ENCODE measurements at regions of chr20 and their contacts with region 1.

Region 1: GRCh38 chr20:3888622-3889488 is at the start of gene PANK2:
- DNase-seq: peak; percentile 85 to 96 (median 94)
- ATAC-seq: peak; percentile 98
- H3K4me3 ChIP-seq: peak within 1 kb of the TSS; percentile 82
- H3K4me3 Mint-ChIP-seq: peak within 1 kb of the TSS; percentile 96 to 100 (median 98)
- H3K27ac ChIP-seq: peak within 1 kb of the TSS; percentile 91
- H3K27ac Mint-ChIP-seq: peak within 1 kb of the TSS; percentile 87 to 99 (median 97)
- H3K4me1 ChIP-seq: peaks cover 10 to 25% of the 10 kb centered on the region in 2 donors
- H3K4me1 Mint-ChIP-seq: peaks cover 42 to 64% (median 55%) of the 10 kb centered on the region in 7 donors
- H3K27me3 ChIP-seq: no peaks in the 10 kb centered on the region
- H3K27me3 Mint-ChIP-seq: no peaks in the 10 kb centered on the region
- total RNA-seq, gene PANK2: 42.4 to 69.7 (median 59.1) TPM

Region 2: GRCh38 chr20:3276680-3277015 is 612.2 kb before region 1 on chr20:
- CTCF ChIA-PET with region 1: no interaction called
- POLR2A ChIA-PET with region 1: no interaction called
- intact Hi-C with region 1: no loop called
- DNase-seq: no peak
- ATAC-seq: no peak
- H3K4me3 ChIP-seq: no peak overlapping the region
- H3K4me3 Mint-ChIP-seq: no peak overlapping the region
- H3K27ac ChIP-seq: no peak overlapping the region
- H3K27ac Mint-ChIP-seq: no peak overlapping the region
- H3K4me1 ChIP-seq: no peaks in the 10 kb centered on the region
- H3K4me1 Mint-ChIP-seq: no peaks in the 10 kb centered on the region
- H3K27me3 ChIP-seq: no peaks in the 10 kb centered on the region
- H3K27me3 Mint-ChIP-seq: no peaks in the 10 kb centered on the region

Region 3: DNA sequence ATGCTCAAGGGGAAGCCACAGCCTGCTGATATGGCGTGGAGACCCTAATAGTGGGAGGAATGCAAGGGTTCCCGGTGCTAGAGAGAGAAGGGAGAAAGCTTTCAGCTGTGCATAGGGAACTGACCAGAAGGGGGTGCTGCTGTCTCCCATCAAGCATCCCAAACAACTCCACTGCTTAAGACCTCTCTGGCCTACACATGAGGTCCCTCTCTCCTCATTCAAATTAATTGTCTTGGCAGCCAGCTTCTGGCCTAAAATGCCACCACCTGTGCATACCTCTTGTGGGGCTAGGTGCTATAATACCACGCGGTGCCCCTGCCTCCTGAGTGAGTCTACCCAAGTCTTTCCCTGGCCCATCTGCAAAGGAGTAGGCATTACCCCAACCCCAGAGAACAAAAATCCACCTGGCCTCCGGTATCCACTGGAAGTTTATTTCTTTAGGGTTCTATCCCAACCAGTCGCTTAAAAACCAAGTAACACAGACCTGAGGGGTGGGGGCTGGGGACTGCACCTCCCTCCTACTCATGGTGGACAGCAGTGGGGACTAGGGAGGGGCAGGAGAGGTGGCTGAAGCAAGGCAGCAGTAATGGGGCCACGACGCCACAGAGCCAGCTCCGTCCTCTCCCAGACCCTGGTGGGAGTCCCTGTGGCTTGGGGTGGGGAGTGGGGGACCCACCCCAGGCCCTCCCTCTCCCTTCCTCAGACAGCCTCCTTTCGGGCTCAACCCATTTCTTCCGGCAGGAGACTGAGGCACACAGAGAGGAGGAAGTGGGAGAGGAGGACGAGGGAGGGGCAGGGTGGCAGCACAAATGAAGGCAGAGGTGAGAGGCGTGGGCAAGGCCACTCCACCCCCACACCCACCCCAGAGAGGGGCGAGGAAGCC is 135.5 kb before region 1 on chr20:
- CTCF ChIA-PET with region 1: no interaction called
- POLR2A ChIA-PET with region 1: no interaction called
- intact Hi-C with region 1: no loop called
- DNase-seq: peak in 8 of 9 donors; percentile 33 to 64 (median 56)
- ATAC-seq: peak; percentile 82
- H3K4me3 ChIP-seq: no peak overlapping the region
- H3K4me3 Mint-ChIP-seq: peak overlapping the region in 5 of 10 donors; percentile 32 to 83 (median 41)
- H3K27ac ChIP-seq: no peak overlapping the region
- H3K27ac Mint-ChIP-seq: peak overlapping the region in 5 of 9 donors; percentile 15 to 86 (median 47)
- H3K4me1 ChIP-seq: peaks cover 0 to 5% of the 10 kb centered on the region in 2 donors
- H3K4me1 Mint-ChIP-seq: peaks cover 0 to 15% (median 4%) of the 10 kb centered on the region in 7 donors
- H3K27me3 ChIP-seq: no peaks in the 10 kb centered on the region
- H3K27me3 Mint-ChIP-seq: no peaks in the 10 kb centered on the region

Region 4: DNA sequence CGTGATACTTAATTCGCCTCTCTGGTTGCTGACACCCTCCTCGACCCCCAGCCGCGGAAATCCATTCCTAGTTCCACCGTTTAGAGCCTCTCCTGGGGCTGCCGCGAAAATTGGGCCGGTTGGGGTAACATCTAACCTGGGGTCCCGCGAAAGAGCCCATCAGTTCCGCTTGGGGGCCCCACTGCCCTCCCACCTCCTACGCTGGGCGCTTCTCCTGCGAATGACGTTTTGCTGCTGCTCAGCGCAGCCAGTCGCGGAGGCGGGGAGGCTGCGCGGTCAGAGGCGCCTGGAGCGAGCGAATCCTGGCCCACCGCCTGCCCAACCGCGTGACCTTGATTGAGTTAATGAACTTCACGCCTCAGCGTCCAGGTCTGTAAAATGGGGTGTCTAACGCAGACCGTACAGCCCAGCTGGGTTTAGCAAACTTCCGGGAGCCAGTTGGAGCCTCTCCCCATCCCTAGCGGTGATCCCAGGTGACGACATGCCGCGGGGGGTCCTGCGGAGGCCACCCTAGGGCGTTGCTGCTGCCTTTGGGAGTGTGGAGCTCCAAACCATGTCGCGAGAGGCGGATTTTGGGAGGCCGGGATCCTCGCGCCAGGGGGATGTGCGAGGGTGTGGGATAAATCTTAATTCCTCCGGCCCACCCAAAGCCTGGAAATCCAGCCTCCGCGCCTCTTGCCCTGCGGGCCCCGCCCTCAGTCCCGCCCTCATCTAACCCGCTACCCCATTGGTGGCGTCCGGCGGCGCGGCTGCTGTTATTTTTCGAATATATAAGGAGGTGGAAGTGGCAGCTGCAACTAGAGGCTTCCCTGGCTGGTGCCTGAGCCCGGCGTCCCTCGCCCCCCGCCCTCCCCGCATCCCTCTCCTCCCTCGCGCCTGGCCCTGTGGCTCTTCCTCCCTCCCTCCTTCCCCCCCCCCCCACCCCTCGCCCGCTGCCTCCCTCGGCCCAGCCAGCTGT is 93.1 kb before region 1 on chr20 and contains the start of gene CDC25B:
- CTCF ChIA-PET with region 1: no interaction called
- POLR2A ChIA-PET with region 1: no interaction called
- intact Hi-C with region 1: loop called (anchors 1 to 2 kb)
- DNase-seq: peak; percentile 64 to 89 (median 84)
- ATAC-seq: peak; percentile 90
- H3K4me3 ChIP-seq: peak within 1 kb of the TSS; percentile 90
- H3K4me3 Mint-ChIP-seq: peak within 1 kb of the TSS; percentile 90 to 99 (median 98)
- H3K27ac ChIP-seq: peak within 1 kb of the TSS; percentile 95
- H3K27ac Mint-ChIP-seq: peak within 1 kb of the TSS; percentile 81 to 99 (median 97)
- H3K4me1 ChIP-seq: peaks cover 27 to 39% of the 10 kb centered on the region in 2 donors
- H3K4me1 Mint-ChIP-seq: peaks cover 24 to 43% (median 39%) of the 10 kb centered on the region in 7 donors
- H3K27me3 ChIP-seq: no peaks in the 10 kb centered on the region
- H3K27me3 Mint-ChIP-seq: peaks cover 0 to 7% (median 0%) of the 10 kb centered on the region in 5 donors
- total RNA-seq, gene CDC25B: 166 to 392 (median 281) TPM

Region 5: GRCh38 chr20:3846740-3847428 is 42.0 kb before region 1 on chr20 and contains the start of gene MAVS:
- CTCF ChIA-PET with region 1: no interaction called
- POLR2A ChIA-PET with region 1: no interaction called
- intact Hi-C with region 1: loop called (anchors 1 to 5 kb)
- DNase-seq: peak; percentile 76 to 93 (median 82)
- ATAC-seq: peak; percentile 100
- H3K4me3 ChIP-seq: peak within 1 kb of the TSS; percentile 86
- H3K4me3 Mint-ChIP-seq: peak within 1 kb of the TSS; percentile 85 to 93 (median 90)
- H3K27ac ChIP-seq: peak within 1 kb of the TSS; percentile 96
- H3K27ac Mint-ChIP-seq: peak within 1 kb of the TSS; percentile 59 to 95 (median 90)
- H3K4me1 ChIP-seq: peaks cover 0 to 10% of the 10 kb centered on the region in 2 donors
- H3K4me1 Mint-ChIP-seq: peaks cover 16 to 30% (median 27%) of the 10 kb centered on the region in 7 donors
- H3K27me3 ChIP-seq: no peaks in the 10 kb centered on the region
- H3K27me3 Mint-ChIP-seq: no peaks in the 10 kb centered on the region
- total RNA-seq, gene MAVS: 23.3 to 49.9 (median 41.5) TPM

Region 6: DNA sequence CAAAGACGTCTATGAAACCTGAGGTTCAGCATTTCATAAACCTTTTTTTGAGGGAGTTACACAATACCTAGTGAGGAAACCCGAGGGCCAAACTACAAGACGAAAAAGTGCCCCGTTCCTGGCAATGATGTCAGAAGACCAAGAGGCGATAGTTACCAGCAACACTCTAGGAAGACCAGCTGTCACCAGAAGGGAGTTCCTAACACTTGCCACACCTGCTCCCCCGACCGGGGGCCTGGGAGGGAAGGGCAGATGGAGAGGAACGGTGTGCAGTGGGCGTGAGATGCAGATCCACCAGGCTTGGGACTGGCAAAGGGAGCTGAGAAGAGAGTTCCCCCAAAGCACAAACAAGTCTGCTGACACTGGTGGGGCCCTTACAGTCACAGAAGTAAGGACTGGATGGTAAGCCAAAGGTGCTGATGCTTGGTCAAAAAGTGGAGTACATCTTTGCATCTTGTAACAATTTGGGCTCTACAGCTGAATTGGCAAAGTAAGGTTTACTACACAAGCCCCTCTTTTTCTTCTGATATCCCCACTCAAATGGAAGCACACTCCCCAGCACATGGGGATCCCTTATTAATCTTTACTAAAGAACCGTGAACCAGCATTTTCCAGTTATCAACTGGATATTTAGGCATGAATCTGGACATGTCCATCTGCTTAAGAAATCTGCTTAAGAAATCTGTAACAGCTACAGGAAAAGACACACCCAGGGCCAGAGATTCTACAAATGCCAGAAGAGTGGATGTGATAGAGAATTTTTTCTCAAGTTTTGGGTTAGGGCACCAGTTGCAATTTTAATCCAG is 38.8 kb after region 1 on chr20:
- CTCF ChIA-PET with region 1: no interaction called
- POLR2A ChIA-PET with region 1: interaction called, 3 read pairs
- intact Hi-C with region 1: loop called (anchors 1 to 5 kb)
- DNase-seq: no peak
- ATAC-seq: peak; percentile 27
- H3K4me3 ChIP-seq: no peak overlapping the region
- H3K4me3 Mint-ChIP-seq: peak overlapping the region in 2 of 10 donors; percentile 17 to 19
- H3K27ac ChIP-seq: no peak overlapping the region
- H3K27ac Mint-ChIP-seq: peak overlapping the region; percentile 11 to 76 (median 60)
- H3K4me1 ChIP-seq: peaks cover 4 to 6% of the 10 kb centered on the region in 2 donors
- H3K4me1 Mint-ChIP-seq: peaks cover 32 to 72% (median 40%) of the 10 kb centered on the region in 7 donors
- H3K27me3 ChIP-seq: no peaks in the 10 kb centered on the region
- H3K27me3 Mint-ChIP-seq: no peaks in the 10 kb centered on the region

Region 7: DNA sequence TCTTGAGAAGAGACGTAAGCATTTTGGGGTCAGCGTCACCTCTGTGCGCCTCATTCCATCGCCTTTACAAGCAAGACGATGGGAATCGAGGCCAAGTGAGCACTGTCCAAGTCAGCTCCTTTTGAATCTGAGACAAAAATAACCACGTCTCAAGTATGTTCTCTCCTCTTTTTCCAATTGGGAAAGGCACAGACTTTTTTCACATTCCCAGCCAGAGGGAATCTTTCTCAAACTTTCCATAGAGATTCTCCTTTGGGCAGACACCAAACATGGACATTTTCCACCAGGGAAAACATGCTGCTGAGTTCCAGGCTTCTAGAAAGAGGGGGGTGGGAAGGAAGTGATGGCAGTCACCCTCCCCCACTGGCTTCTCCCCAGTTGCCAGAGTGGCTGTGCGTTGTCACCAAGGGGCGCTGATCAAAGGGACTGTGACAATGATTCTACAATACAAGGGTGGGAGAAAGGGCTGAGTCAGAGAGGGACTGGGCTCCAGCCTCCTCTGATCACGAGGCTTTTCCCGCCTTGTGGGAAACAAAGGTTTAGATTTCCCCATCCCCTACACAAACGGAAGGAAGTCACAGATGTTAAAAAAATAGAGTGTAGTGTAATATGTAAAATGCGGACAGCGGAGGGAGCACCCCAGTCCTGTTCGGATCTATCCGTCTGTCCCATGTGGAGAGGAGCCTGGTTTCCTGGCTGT is 408.4 kb after region 1 on chr20:
- CTCF ChIA-PET with region 1: no interaction called
- POLR2A ChIA-PET with region 1: no interaction called
- intact Hi-C with region 1: no loop called
- DNase-seq: no peak
- ATAC-seq: peak; percentile 51
- H3K4me3 ChIP-seq: no peak overlapping the region
- H3K4me3 Mint-ChIP-seq: no peak overlapping the region
- H3K27ac ChIP-seq: no peak overlapping the region
- H3K27ac Mint-ChIP-seq: no peak overlapping the region
- H3K4me1 ChIP-seq: no peaks in the 10 kb centered on the region
- H3K4me1 Mint-ChIP-seq: no peaks in the 10 kb centered on the region
- H3K27me3 ChIP-seq: no peaks in the 10 kb centered on the region
- H3K27me3 Mint-ChIP-seq: peaks cover 24 to 54% (median 41%) of the 10 kb centered on the region in 5 donors